PC-3 (cell line): ENCODE measurements at regions of chr1 and their contacts with region 1.

Region 1: DNA sequence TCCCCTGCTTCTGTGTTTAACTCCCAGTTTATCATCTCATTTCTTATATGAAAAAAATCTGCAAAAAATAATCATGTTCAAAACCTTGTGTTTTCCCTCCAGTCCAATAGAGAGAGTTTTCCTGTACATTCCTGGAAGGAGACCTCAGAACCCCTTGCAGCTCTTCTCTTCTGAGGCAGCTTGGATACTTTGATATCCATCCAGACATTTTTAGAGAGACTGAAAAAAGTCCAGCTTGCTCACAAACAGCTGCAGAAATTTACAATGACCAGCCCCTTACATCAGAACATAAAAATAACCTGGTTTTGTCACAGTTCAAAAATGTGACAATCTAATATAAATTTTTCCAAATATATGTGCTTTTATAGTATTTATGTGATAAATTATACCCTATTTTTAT is 73.3 kb upstream of the C1orf115 start:
- DNase-seq: no peak
- ATAC-seq: no peak
- H3K4me3 ChIP-seq: no peak overlapping the region
- H3K27ac ChIP-seq: no peak overlapping the region
- H3K4me1 ChIP-seq: no peaks in the 10 kb centered on the region
- H3K27me3 ChIP-seq: peaks cover 46% of the 10 kb centered on the region
- CTCF ChIP-seq: no peak

Region 2: GRCh38 chr1:220604934-220605333 is 11.9 kb before region 1 on chr1:
- CTCF ChIA-PET with region 1: no interaction called
- POLR2A ChIA-PET with region 1: no interaction called
- intact Hi-C with region 1: loop called (anchors 1 kb)
- DNase-seq: no peak
- ATAC-seq: no peak
- H3K4me3 ChIP-seq: no peak overlapping the region
- H3K27ac ChIP-seq: no peak overlapping the region
- H3K4me1 ChIP-seq: no peaks in the 10 kb centered on the region
- H3K27me3 ChIP-seq: no peaks in the 10 kb centered on the region
- CTCF ChIP-seq: no peak

Region 3: DNA sequence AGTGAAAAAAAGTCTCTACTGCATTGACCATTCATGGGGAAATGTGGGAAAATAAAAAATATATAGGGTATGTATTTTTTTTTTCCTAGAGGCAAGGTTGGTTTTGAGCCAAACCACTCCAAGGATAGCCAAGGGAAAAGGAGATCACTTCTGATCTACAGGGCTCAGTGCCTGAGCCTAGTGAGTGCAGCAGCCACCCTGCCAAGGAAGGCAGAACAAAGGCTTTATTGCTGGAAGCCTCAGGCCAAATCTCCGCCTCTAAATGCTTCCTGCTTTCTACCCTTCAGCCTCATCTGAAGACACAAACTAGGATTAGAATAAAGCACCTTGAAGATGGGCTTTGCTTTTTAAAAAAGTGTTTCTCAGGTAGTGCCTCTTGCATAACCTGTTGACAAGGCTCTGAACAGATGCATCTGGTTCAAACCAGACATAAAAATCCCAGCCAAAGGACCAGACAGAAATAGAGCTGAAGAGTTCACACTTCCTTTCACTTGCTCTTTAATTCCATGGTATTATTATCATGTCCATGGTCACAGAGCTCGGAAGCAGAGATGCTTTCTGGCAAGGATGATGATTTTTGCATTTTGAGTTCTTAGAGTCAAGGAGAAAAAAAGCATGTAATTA is 83.8 kb after region 1 on chr1:
- CTCF ChIA-PET with region 1: no interaction called
- POLR2A ChIA-PET with region 1: no interaction called
- intact Hi-C with region 1: no loop called
- DNase-seq: peak; percentile 51
- ATAC-seq: peak; percentile 89
- H3K4me3 ChIP-seq: no peak overlapping the region
- H3K27ac ChIP-seq: no peak overlapping the region
- H3K4me1 ChIP-seq: no peaks in the 10 kb centered on the region
- H3K27me3 ChIP-seq: no peaks in the 10 kb centered on the region
- CTCF ChIP-seq: no peak